ENCODE measurements at regions of chr15 and their contacts with region 1.

Region 1: DNA sequence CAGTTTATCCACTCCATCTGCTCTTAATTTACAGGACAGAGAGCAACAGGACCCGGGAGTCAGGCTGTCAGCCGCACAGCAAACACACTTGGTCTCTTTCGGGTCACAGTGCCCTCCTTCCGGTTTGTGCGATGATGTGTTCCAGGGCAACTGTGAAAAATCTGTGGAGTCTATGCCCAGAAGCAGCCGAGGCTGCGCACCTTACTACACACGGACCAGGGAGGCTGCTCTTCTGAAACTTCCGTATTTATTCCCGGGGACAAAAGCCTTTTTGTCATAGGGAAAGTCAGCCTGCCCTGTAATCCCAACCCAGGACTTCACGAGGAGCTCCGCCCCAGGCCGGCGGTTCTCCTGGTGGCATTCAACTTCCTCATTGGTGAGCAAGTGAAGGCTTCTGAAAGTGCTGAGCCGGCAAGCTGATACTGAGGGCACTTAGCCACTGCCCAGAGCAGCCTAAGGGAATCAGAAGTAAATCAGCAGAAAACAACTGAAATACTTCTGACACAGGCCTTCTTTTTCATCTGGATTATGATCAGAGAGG is 126.5 kb downstream of the FMN1 start:
- DNase-seq: peak in 1 of 2 donors; percentile 88
- ATAC-seq: peak; percentile 58
- H3K4me3 ChIP-seq: peak overlapping the region in 1 of 2 donors; percentile 27
- H3K27ac ChIP-seq: no peak overlapping the region
- H3K4me1 ChIP-seq: no peaks in the 10 kb centered on the region
- H3K27me3 ChIP-seq: no peaks in the 10 kb centered on the region

Region 2: GRCh38 chr15:33007303-33007855 is 60.6 kb before region 1 on chr15:
- intact Hi-C with region 1: loop called in 1 of 2 experiments (anchors 10 kb)
- DNase-seq: no peak
- ATAC-seq: peak; percentile 58
- H3K4me3 ChIP-seq: no peak overlapping the region
- H3K27ac ChIP-seq: peak overlapping the region in 1 of 2 donors; percentile 43
- H3K4me1 ChIP-seq: peaks cover 0 to 1% of the 10 kb centered on the region in 2 donors
- H3K27me3 ChIP-seq: no peaks in the 10 kb centered on the region

Region 3: GRCh38 chr15:33251362-33251761 is 183.4 kb after region 1 on chr15:
- intact Hi-C with region 1: no loop called
- DNase-seq: no peak
- ATAC-seq: no peak
- H3K4me3 ChIP-seq: no peak overlapping the region
- H3K27ac ChIP-seq: no peak overlapping the region
- H3K4me1 ChIP-seq: no peaks in the 10 kb centered on the region
- H3K27me3 ChIP-seq: no peaks in the 10 kb centered on the region

Region 4: DNA sequence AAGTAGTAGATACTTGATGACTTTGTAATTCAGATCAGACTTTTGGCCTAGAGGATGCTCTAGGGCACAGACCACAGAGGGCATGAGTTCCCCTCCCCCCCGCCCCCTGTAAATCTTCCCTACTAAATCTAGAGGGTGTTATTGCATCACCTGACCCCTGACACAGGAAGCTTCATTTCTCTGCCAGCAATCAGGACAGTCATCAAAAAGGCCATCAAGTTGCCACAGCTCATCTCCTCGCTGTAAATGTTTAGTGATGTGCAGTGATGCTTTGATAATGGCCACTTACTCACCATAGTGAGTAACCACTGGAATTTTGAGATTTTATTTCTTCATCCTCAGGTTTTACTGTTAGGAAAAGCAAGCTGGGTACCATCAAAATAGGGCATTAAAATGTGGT is 611.0 kb after region 1 on chr15:
- intact Hi-C with region 1: no loop called
- DNase-seq: no peak
- ATAC-seq: no peak
- H3K4me3 ChIP-seq: no peak overlapping the region
- H3K27ac ChIP-seq: no peak overlapping the region
- H3K4me1 ChIP-seq: peaks cover 2 to 11% of the 10 kb centered on the region in 2 donors
- H3K27me3 ChIP-seq: no peaks in the 10 kb centered on the region

Measured in aorta (tissue), 5 donors.